ENCODE measurements at regions of chr17 and their contacts with region 1.

Region 1: GRCh38 chr17:50087246-50087911 is 7.8 kb upstream of the PDK2 start:
- DNase-seq: peak; percentile 75 to 83
- ATAC-seq: peak; percentile 82 to 94 (median 93)
- H3K4me3 ChIP-seq: no peak overlapping the region
- H3K4me3 Mint-ChIP-seq: no peak overlapping the region
- H3K27ac ChIP-seq: no peak overlapping the region
- H3K27ac Mint-ChIP-seq: no peak overlapping the region
- H3K4me1 ChIP-seq: no peaks in the 10 kb centered on the region
- H3K4me1 Mint-ChIP-seq: no peaks in the 10 kb centered on the region
- H3K27me3 ChIP-seq: no peaks in the 10 kb centered on the region
- H3K27me3 Mint-ChIP-seq: peaks cover 0 to 4% of the 10 kb centered on the region in 2 donors
- CTCF ChIP-seq: peak; percentile 98

Region 2: DNA sequence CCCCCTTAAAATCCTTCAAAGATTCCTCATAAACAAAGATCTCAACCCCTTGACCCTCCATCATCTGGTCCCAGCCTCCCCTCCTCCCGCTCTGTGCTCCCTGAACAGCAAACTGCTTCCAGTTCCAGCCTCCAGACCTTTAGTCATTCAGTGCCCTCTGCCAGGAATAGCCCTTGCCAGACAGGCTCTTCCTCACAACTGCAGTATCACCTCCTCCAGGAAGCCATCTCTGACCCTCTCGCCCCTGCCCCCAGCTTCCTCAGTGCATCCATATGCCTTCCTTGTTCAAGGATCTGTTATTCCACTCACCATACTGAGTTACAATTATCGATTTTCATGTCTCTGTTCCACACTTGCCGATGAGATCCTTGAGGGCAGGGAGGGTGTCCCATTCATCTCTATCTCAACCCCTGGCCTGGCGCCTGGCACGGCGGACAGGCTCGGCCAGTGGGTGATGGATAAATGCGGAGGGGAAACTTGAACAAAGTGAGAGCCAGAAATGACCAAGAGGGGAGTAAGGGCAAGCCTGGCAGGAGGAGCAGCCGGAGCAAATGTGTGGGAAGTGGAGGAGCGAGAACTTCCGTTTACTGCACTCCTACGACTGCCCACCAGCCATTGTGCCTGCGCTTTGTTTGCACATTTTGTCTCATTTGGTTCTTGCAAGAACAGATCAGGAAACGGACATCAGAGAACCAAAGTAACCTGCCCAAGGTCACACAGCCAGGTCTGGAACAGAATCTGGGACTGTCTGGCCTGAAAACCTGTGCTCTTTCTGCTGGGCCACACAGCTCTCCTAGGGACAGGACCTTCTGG is 513.7 kb before region 1 on chr17:
- intact Hi-C with region 1: loop called (anchors 2 kb)
- DNase-seq: no peak
- ATAC-seq: no peak
- H3K4me3 ChIP-seq: no peak overlapping the region
- H3K4me3 Mint-ChIP-seq: peak overlapping the region; percentile 35
- H3K27ac ChIP-seq: no peak overlapping the region
- H3K27ac Mint-ChIP-seq: no peak overlapping the region
- H3K4me1 ChIP-seq: peaks cover 32% of the 10 kb centered on the region
- H3K4me1 Mint-ChIP-seq: peaks cover 0 to 25% of the 10 kb centered on the region in 2 donors
- H3K27me3 ChIP-seq: peaks cover 32% of the 10 kb centered on the region
- H3K27me3 Mint-ChIP-seq: peaks cover 34 to 58% of the 10 kb centered on the region in 2 donors
- CTCF ChIP-seq: no peak

Region 3: GRCh38 chr17:50026901-50027630 is 60.3 kb before region 1 on chr17:
- intact Hi-C with region 1: loop called (anchors 1 kb)
- DNase-seq: peak; percentile 78 to 87
- ATAC-seq: peak; percentile 60 to 84 (median 71)
- H3K4me3 ChIP-seq: no peak overlapping the region
- H3K4me3 Mint-ChIP-seq: no peak overlapping the region
- H3K27ac ChIP-seq: no peak overlapping the region
- H3K27ac Mint-ChIP-seq: no peak overlapping the region
- H3K4me1 ChIP-seq: peaks cover 10% of the 10 kb centered on the region
- H3K4me1 Mint-ChIP-seq: peaks cover 0 to 20% of the 10 kb centered on the region in 2 donors
- H3K27me3 ChIP-seq: peaks cover 10% of the 10 kb centered on the region
- H3K27me3 Mint-ChIP-seq: peaks cover 23 to 28% of the 10 kb centered on the region in 2 donors
- CTCF ChIP-seq: peak; percentile 90

Region 4: DNA sequence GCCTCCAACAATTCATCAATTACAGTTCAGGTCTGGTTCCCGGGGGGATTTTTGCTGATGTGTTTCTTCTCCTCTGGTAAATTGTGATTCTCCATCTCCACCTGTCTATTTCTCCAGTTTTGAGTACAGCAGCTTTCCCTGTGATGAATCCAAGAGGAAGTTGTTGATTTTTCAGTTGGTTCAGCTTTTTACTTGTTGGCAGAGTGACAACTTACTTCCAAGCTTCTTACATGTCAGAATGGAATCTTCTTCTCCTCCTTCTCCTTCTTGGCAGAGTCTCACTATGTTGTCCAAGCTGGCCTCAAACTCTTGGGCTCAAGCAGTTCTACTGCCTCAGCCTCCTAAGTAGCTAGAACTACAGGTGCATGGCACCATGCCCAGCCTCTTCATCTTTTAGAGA is 153.5 kb after region 1 on chr17:
- intact Hi-C with region 1: no loop called
- DNase-seq: no peak
- ATAC-seq: no peak
- H3K4me3 ChIP-seq: no peak overlapping the region
- H3K4me3 Mint-ChIP-seq: no peak overlapping the region
- H3K27ac ChIP-seq: no peak overlapping the region
- H3K27ac Mint-ChIP-seq: no peak overlapping the region
- H3K4me1 ChIP-seq: no peaks in the 10 kb centered on the region
- H3K4me1 Mint-ChIP-seq: no peaks in the 10 kb centered on the region
- H3K27me3 ChIP-seq: peaks cover 3% of the 10 kb centered on the region
- H3K27me3 Mint-ChIP-seq: peaks cover 20 to 30% of the 10 kb centered on the region in 2 donors
- CTCF ChIP-seq: no peak

Measured in natural killer cell (primary cell).